B cell (primary cell): ENCODE measurements at regions of chr12 and their contacts with region 1.

Region 1: DNA sequence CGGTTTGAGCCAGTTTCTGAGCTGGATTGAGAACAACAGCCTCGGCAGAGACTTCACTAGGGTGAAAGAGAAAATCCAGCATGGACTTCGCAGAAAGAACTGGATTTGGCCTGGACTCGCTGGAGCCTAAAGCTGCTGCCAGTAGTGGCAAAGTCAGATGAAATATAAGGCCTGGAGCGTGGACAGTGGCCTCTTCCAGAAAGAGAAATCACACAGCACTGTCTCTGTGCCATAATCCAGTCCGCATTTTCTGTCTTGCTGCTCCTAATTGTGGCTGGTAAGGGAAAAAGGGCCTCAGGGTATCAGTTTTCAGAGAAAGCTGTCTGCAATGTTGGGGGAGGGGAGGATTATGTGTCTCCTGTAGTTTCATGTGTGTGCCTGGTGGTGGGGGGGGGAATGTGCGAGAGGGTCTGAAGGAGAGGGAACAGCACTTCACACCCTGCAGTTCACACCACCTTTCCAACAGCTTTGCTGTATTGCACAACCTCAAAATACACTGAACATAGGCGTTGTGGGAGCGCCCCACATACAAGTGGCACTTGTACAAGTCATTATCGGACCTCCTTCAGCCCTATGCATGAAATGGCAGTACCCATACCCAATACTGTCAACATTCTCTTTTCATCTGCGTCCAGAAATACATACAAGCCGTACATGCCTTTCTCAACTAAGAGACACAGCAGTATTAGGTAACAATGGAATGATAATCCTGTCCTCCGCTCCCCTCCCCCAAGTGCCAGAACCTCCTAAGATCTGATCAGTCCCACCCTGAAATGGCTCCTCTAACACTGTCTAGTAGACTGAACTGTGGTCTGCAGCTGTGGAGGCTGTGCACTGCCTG is 107.5 kb upstream of the ATF7IP start:
- DNase-seq: peak; percentile 81
- ATAC-seq: peak; percentile 64
- H3K4me3 ChIP-seq: peak overlapping the region in 3 of 5 experiments; percentile 1 to 52 (median 8)
- H3K4me3 Mint-ChIP-seq: peak overlapping the region; percentile 79
- H3K27ac ChIP-seq: peak overlapping the region; percentile 81 to 90
- H3K27ac Mint-ChIP-seq: peak overlapping the region; percentile 98
- H3K4me1 ChIP-seq: peaks cover 41 to 60% of the 10 kb centered on the region in 2 donors
- H3K4me1 Mint-ChIP-seq: peaks cover 62% of the 10 kb centered on the region
- H3K27me3 ChIP-seq: no peaks in the 10 kb centered on the region
- H3K27me3 Mint-ChIP-seq: no peaks in the 10 kb centered on the region
- CTCF ChIP-seq: no peak

Region 2: GRCh38 chr12:14272956-14273907 is 15.3 kb after region 1 on chr12:
- CTCF ChIA-PET with region 1: interaction called, 11 read pairs
- POLR2A ChIA-PET with region 1: interaction called, 3 read pairs
- intact Hi-C with region 1: loop called (anchors 1 kb)
- DNase-seq: peak; percentile 50
- ATAC-seq: peak; percentile 60
- H3K4me3 ChIP-seq: peak overlapping the region in 1 of 5 experiments; percentile 0
- H3K4me3 Mint-ChIP-seq: peak overlapping the region; percentile 46
- H3K27ac ChIP-seq: peak overlapping the region; percentile 55 to 65
- H3K27ac Mint-ChIP-seq: peak overlapping the region; percentile 78
- H3K4me1 ChIP-seq: peaks cover 40 to 49% of the 10 kb centered on the region in 2 donors
- H3K4me1 Mint-ChIP-seq: peaks cover 45% of the 10 kb centered on the region
- H3K27me3 ChIP-seq: no peaks in the 10 kb centered on the region
- H3K27me3 Mint-ChIP-seq: no peaks in the 10 kb centered on the region
- CTCF ChIP-seq: no peak

Region 3: GRCh38 chr12:14278294-14278953 is 20.5 kb after region 1 on chr12:
- CTCF ChIA-PET with region 1: interaction called, 11 read pairs
- POLR2A ChIA-PET with region 1: interaction called, 12 read pairs
- intact Hi-C with region 1: loop called (anchors 1 kb)
- DNase-seq: peak; percentile 61
- ATAC-seq: peak; percentile 38
- H3K4me3 ChIP-seq: peak overlapping the region in 1 of 5 experiments; percentile 34
- H3K4me3 Mint-ChIP-seq: peak overlapping the region; percentile 46
- H3K27ac ChIP-seq: peak overlapping the region; percentile 72 to 82
- H3K27ac Mint-ChIP-seq: peak overlapping the region; percentile 92
- H3K4me1 ChIP-seq: peaks cover 65 to 93% of the 10 kb centered on the region in 2 donors
- H3K4me1 Mint-ChIP-seq: peaks cover 63% of the 10 kb centered on the region
- H3K27me3 ChIP-seq: no peaks in the 10 kb centered on the region
- H3K27me3 Mint-ChIP-seq: no peaks in the 10 kb centered on the region
- CTCF ChIP-seq: no peak

Region 4: GRCh38 chr12:14284184-14284722 is 26.3 kb after region 1 on chr12:
- CTCF ChIA-PET with region 1: interaction called, 8 read pairs
- POLR2A ChIA-PET with region 1: interaction called, 12 read pairs
- intact Hi-C with region 1: loop called (anchors 1 kb)
- DNase-seq: peak; percentile 51
- ATAC-seq: peak; percentile 40
- H3K4me3 ChIP-seq: peak overlapping the region in 1 of 5 experiments; percentile 25
- H3K4me3 Mint-ChIP-seq: peak overlapping the region; percentile 79
- H3K27ac ChIP-seq: peak overlapping the region; percentile 92 to 95
- H3K27ac Mint-ChIP-seq: peak overlapping the region; percentile 97
- H3K4me1 ChIP-seq: peaks cover 39 to 64% of the 10 kb centered on the region in 2 donors
- H3K4me1 Mint-ChIP-seq: peaks cover 48% of the 10 kb centered on the region
- H3K27me3 ChIP-seq: no peaks in the 10 kb centered on the region
- H3K27me3 Mint-ChIP-seq: no peaks in the 10 kb centered on the region
- CTCF ChIP-seq: no peak

Region 5: GRCh38 chr12:14417715-14418114 is 159.8 kb after region 1 on chr12:
- CTCF ChIA-PET with region 1: interaction called, 6 read pairs
- POLR2A ChIA-PET with region 1: no interaction called
- intact Hi-C with region 1: loop called (anchors 5 kb)
- DNase-seq: peak; percentile 67
- ATAC-seq: peak; percentile 48
- H3K4me3 ChIP-seq: no peak overlapping the region
- H3K4me3 Mint-ChIP-seq: peak overlapping the region; percentile 75
- H3K27ac ChIP-seq: no peak overlapping the region
- H3K27ac Mint-ChIP-seq: peak overlapping the region; percentile 62
- H3K4me1 ChIP-seq: peaks cover 21 to 42% of the 10 kb centered on the region in 2 donors
- H3K4me1 Mint-ChIP-seq: peaks cover 53% of the 10 kb centered on the region
- H3K27me3 ChIP-seq: no peaks in the 10 kb centered on the region
- H3K27me3 Mint-ChIP-seq: no peaks in the 10 kb centered on the region
- CTCF ChIP-seq: no peak

Region 6: DNA sequence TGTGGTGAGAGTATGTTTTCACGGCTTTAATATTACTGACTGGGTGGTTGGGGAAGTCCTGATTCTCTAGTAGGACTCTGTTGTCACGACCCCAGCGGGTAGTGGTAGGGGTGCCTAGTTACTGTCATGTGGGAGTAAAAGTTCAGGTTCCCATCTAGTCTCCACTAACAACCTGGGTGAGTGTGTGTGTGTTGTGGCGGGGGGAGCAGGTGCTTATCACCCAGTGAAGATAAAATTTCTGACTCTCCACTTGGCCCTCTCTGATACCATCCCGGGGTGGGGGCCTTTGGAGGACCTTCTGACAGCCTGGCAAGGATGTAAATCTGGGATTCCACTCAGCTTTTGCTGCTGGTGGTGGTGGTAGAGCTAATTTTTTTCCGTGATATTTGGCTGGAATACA is 473.9 kb after region 1 on chr12:
- CTCF ChIA-PET with region 1: no interaction called
- POLR2A ChIA-PET with region 1: no interaction called
- intact Hi-C with region 1: no loop called
- DNase-seq: no peak
- ATAC-seq: no peak
- H3K4me3 ChIP-seq: no peak overlapping the region
- H3K4me3 Mint-ChIP-seq: no peak overlapping the region
- H3K27ac ChIP-seq: no peak overlapping the region
- H3K27ac Mint-ChIP-seq: no peak overlapping the region
- H3K4me1 ChIP-seq: no peaks in the 10 kb centered on the region
- H3K4me1 Mint-ChIP-seq: no peaks in the 10 kb centered on the region
- H3K27me3 ChIP-seq: peaks cover 0 to 6% (median 0%) of the 10 kb centered on the region in 4 experiments
- H3K27me3 Mint-ChIP-seq: peaks cover 17% of the 10 kb centered on the region
- CTCF ChIP-seq: no peak

Region 7: GRCh38 chr12:14952299-14952921 is 694.5 kb after region 1 on chr12:
- CTCF ChIA-PET with region 1: no interaction called
- POLR2A ChIA-PET with region 1: no interaction called
- intact Hi-C with region 1: no loop called
- DNase-seq: peak; percentile 78
- ATAC-seq: peak; percentile 53
- H3K4me3 ChIP-seq: peak overlapping the region; percentile 2 to 49 (median 27)
- H3K4me3 Mint-ChIP-seq: peak overlapping the region; percentile 82
- H3K27ac ChIP-seq: peak overlapping the region; percentile 87 to 94
- H3K27ac Mint-ChIP-seq: peak overlapping the region; percentile 94
- H3K4me1 ChIP-seq: peaks cover 97 to 98% of the 10 kb centered on the region in 2 donors
- H3K4me1 Mint-ChIP-seq: peaks cover 90% of the 10 kb centered on the region
- H3K27me3 ChIP-seq: no peaks in the 10 kb centered on the region
- H3K27me3 Mint-ChIP-seq: no peaks in the 10 kb centered on the region
- CTCF ChIP-seq: no peak